Activated CD8-positive, alpha-beta T cell treated with anti-CD3 and anti-CD28 coated beads, Interleukin-2, amount 10 ng/mL, durations not matched to agents 7 days and 5 days (primary cell): ENCODE measurements at regions of chr10 and their contacts with region 1.

Region 1: GRCh38 chr10:75019370-75019769 is 92.1 kb upstream of the SAMD8 start:
- DNase-seq: peak; percentile 47
- ATAC-seq: peak; percentile 57
- H3K4me3 Mint-ChIP-seq: no peak overlapping the region
- H3K27ac Mint-ChIP-seq: no peak overlapping the region
- H3K4me1 Mint-ChIP-seq: peaks cover 48% of the 10 kb centered on the region
- H3K27me3 Mint-ChIP-seq: no peaks in the 10 kb centered on the region

Region 2: GRCh38 chr10:74244097-74244685 is 775.2 kb before region 1 on chr10:
- CTCF ChIA-PET with region 1: interaction called, 16 read pairs
- POLR2A ChIA-PET with region 1: no interaction called
- DNase-seq: peak; percentile 45
- ATAC-seq: no peak
- H3K4me3 Mint-ChIP-seq: no peak overlapping the region
- H3K27ac Mint-ChIP-seq: no peak overlapping the region
- H3K4me1 Mint-ChIP-seq: no peaks in the 10 kb centered on the region
- H3K27me3 Mint-ChIP-seq: no peaks in the 10 kb centered on the region

Region 3: DNA sequence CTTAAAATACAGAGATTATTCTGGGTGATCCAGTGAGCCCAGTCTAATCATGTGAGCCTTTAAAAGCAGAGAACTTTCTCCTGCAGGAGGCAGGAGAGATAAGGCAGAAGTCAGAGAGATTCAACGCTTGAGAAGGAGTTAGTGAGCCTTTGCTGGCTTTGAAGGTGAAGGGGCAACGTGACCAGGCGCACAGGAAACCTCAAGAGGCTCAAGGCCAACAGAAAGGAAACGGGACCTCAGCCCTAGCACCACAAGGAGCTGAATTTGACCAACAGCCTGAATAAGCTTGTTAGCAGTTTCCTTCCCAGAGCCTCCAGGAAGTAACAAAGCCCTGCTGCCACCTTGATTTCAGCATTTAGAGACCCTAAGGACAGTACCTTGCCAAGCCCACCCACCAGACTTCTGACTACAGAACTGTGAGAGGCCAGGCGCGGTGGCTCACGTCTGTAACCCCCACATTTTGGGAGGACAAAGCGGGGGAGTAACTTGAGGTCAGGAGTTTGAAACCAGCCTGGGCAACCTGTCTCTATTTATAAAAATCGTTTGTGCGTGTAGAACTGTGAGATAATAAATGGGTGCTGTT is 280.3 kb before region 1 on chr10:
- CTCF ChIA-PET with region 1: interaction called, 54 read pairs
- POLR2A ChIA-PET with region 1: interaction called, 6 read pairs
- DNase-seq: peak; percentile 84
- ATAC-seq: peak; percentile 88
- H3K4me3 Mint-ChIP-seq: peak overlapping the region; percentile 69
- H3K27ac Mint-ChIP-seq: peak overlapping the region; percentile 97
- H3K4me1 Mint-ChIP-seq: peaks cover 34% of the 10 kb centered on the region
- H3K27me3 Mint-ChIP-seq: no peaks in the 10 kb centered on the region

Region 4: DNA sequence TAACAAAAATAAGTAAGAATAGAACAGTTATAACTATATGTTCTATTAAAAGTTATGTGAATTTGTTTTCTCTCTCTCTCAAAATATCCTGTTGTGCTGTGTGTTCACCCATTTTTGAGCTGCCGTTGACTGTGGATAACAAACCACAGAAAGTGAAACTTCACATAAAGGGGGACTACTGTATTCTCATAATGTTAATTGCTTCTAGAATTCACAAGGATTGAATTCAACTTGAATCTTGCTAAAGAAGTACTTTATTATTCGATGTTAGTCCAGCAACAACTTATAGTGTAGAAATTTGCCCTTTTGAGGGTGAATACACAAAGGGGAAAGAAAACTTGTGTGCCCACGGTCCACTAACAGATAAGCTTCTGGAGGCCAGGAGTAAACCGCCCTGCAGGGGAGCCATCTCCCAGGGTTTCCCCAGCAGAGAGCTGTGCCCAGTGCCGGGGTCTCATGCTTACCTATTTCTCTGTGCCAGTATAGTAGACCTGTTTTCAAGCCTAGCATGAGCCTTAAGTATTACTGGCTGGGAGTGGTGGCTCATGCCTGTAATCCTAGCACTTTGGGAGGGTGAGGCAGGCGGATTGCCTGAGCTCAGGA is 105.9 kb before region 1 on chr10:
- CTCF ChIA-PET with region 1: interaction called, 14 read pairs
- POLR2A ChIA-PET with region 1: no interaction called
- DNase-seq: no peak
- ATAC-seq: peak; percentile 82
- H3K4me3 Mint-ChIP-seq: peak overlapping the region; percentile 58
- H3K27ac Mint-ChIP-seq: peak overlapping the region; percentile 54
- H3K4me1 Mint-ChIP-seq: peaks cover 18% of the 10 kb centered on the region
- H3K27me3 Mint-ChIP-seq: no peaks in the 10 kb centered on the region

Region 5: DNA sequence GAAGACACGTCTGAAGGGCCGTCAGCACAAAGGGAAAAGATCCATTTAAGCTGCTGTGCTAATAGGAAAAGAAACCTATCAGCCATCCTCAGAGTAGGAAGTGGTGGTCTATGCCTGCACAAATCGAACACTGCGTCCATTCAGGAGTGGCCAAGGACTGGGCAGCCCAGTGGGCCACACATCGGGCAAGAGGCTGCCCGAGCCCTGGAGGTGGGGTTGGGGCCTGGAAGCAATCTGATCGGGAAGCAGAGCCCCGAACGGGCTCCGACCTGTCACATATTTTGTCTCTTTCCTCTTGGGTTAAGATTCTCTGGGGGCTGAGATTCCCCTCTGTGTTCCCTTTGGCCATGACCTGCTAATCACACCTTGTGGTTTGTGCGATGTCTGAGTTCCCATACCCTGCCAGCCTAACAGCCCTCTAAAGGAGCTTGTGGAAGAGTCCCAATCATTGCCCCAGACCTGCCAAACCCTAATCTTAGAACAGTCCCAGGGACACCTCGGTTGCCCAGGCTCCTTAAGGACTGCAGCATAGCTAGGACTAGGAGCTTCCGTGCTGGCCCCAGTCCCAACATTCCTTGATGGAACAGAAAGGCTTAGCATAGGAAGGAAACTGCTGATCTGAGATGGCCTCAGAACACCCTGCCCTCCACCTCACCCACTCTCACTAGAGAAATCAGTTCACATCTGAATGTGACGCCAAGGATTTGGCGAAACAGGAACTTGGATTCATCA is 14.2 kb after region 1 on chr10:
- CTCF ChIA-PET with region 1: interaction called, 11 read pairs
- POLR2A ChIA-PET with region 1: interaction called, 3 read pairs
- DNase-seq: no peak
- ATAC-seq: no peak
- H3K4me3 Mint-ChIP-seq: no peak overlapping the region
- H3K27ac Mint-ChIP-seq: no peak overlapping the region
- H3K4me1 Mint-ChIP-seq: peaks cover 31% of the 10 kb centered on the region
- H3K27me3 Mint-ChIP-seq: no peaks in the 10 kb centered on the region

Region 6: DNA sequence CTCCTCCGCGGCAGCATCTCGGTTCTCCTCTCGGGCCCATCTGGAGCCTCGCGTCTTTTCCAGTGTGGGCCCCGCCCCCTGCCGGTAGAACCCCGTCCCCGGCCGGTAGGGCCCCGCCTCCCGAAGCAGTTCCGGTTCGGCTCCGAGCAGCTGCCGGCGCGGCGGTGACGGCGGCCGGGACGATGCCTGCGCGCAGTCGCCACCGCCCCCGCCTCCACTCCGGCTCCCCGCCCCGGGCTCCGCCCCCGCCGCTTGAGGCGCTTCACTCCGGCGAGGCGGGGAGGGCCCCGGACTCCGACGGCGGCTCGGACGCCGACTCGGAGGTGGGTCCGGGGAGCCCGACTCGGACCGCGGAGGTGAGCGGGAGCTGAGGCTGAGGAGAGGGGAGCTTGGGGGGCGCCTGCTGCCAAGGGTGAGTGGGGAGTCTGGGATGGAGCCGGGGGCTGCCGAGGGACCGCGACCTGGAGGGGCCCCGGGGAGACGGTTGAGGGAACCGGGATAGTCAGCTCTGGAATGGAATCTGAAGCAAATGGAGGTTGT is 92.1 kb after region 1 on chr10 and contains the start of gene SAMD8:
- CTCF ChIA-PET with region 1: no interaction called
- POLR2A ChIA-PET with region 1: no interaction called
- DNase-seq: peak; percentile 98
- ATAC-seq: peak; percentile 90
- H3K4me3 Mint-ChIP-seq: peak within 1 kb of the TSS; percentile 80
- H3K27ac Mint-ChIP-seq: peak within 1 kb of the TSS; percentile 88
- H3K4me1 Mint-ChIP-seq: peaks cover 48% of the 10 kb centered on the region
- H3K27me3 Mint-ChIP-seq: no peaks in the 10 kb centered on the region
- total RNA-seq, gene SAMD8: 17.4 to 18.2 TPM